OCI-LY7 (cell line): ENCODE measurements at regions of chr1 and their contacts with region 1.

Region 1: DNA sequence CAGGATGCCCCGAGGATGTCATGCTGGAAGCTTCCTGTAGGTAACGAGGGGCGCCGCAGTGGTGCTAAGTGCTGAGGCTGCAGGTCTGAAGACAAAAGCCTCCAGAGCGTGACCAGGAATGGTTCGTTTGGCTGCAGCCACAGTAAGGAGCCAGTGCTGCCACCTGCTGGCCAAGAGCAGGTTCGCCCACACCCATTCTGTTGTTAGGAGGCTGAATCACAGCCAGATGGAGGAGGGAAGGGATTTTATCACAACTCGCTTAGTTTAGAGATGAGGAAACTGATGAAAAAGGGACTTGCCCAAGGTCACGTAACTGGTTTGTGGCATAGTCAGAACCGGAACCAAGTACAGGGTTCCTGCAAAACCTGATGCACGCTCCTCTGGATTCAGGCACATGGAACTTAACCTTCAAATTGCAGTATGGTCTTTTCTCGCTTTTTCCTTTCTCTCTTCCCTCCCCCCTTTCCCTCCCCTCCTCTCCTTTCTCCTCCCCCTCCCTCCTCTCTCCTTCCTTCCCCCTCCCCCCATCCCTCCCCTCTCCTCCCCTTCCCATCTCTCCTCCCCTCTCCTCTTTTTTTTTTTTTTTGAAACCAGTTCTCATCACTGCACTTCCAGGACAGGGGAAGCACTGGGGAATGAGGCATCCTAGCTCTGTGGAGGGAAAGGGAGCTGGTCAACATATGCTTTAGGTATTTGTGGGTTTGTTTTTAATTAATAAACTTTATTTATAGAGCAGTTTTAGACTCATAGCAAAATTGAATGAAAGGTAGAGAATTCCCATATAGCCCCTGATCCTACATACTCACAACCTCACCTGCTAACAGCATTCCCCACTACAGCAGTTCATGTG is 81.8 kb downstream of the MPZL1 start:
- DNase-seq: peak; percentile 96
- H3K4me3 ChIP-seq: no peak overlapping the region
- H3K27ac ChIP-seq: no peak overlapping the region
- H3K4me1 ChIP-seq: peaks cover 17% of the 10 kb centered on the region
- CTCF ChIP-seq: peak; percentile 98

Region 2: GRCh38 chr1:167454894-167455785 is 348.4 kb before region 1 on chr1:
- CTCF ChIA-PET with region 1: no interaction called
- POLR2A ChIA-PET with region 1: no interaction called
- intact Hi-C with region 1: loop called (anchors 5 kb)
- DNase-seq: peak; percentile 75
- H3K4me3 ChIP-seq: peak overlapping the region; percentile 70
- H3K27ac ChIP-seq: no peak overlapping the region
- H3K4me1 ChIP-seq: peaks cover 40% of the 10 kb centered on the region
- CTCF ChIP-seq: no peak

Region 3: GRCh38 chr1:167553136-167554027 is 250.2 kb before region 1 on chr1 and contains the start of gene CREG1:
- CTCF ChIA-PET with region 1: no interaction called
- POLR2A ChIA-PET with region 1: no interaction called
- intact Hi-C with region 1: loop called (anchors 5 kb)
- DNase-seq: peak; percentile 92
- H3K4me3 ChIP-seq: peak within 1 kb of the TSS; percentile 84
- H3K27ac ChIP-seq: peak within 1 kb of the TSS; percentile 40
- H3K4me1 ChIP-seq: peaks cover 58% of the 10 kb centered on the region
- CTCF ChIP-seq: 0 out of 2 replicates have a peak, but pooled peaks have one; percentile 10
- total RNA-seq, gene CREG1: 36.0 and 52.2 TPM in 2 replicates

Region 4: DNA sequence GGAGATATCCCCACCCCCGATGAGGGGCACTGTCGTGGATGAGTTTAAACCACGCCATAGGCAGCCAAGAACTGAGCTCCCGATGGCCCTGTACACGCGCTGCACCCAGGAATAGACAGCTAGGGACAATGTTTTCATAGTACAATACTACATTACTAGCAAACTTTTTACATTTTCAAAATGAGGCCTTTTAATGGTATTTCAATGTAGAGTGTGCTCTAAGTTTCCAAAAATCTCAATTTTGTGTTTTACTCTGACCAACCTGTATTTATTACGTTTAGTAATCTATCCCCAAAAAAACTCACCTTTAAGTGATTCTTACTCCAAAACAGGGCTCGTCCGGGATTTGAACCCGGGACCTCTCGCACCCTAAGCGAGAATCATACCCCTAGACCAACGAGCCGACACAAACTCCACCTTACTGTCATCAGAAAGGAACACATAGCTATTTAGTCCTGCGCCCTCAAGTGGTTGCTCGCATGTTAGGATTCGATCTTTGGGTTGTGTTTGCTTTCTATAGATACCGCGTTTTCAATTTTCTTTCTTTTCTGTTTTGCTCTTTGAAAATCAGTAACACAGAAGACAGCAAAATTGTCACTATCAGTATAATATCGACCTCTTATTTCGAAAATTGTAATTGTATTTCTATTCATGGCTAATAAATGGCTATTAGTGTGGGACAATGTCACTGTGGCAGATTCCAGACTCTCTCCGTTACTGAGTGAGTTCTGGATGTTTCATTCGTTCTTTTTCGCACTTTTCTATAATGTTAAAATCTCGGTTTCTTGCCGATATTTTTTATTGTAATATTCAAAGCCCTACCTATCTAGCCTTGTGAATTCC is 88.2 kb before region 1 on chr1:
- CTCF ChIA-PET with region 1: no interaction called
- POLR2A ChIA-PET with region 1: no interaction called
- intact Hi-C with region 1: loop called (anchors 1 kb)
- DNase-seq: peak; percentile 94
- H3K4me3 ChIP-seq: peak overlapping the region; percentile 75
- H3K27ac ChIP-seq: peak overlapping the region; percentile 73
- H3K4me1 ChIP-seq: peaks cover 47% of the 10 kb centered on the region
- CTCF ChIP-seq: peak; percentile 94

Region 5: GRCh38 chr1:167721617-167722151 is 81.9 kb before region 1 on chr1 and contains the start of gene MPZL1:
- CTCF ChIA-PET with region 1: no interaction called
- POLR2A ChIA-PET with region 1: no interaction called
- intact Hi-C with region 1: loop called (anchors 1 kb)
- DNase-seq: peak; percentile 95
- H3K4me3 ChIP-seq: peak within 1 kb of the TSS; percentile 94
- H3K27ac ChIP-seq: peak within 1 kb of the TSS; percentile 78
- H3K4me1 ChIP-seq: peaks cover 78% of the 10 kb centered on the region
- CTCF ChIP-seq: no peak
- total RNA-seq, gene MPZL1: 36.2 and 48.9 TPM in 2 replicates

Region 6: DNA sequence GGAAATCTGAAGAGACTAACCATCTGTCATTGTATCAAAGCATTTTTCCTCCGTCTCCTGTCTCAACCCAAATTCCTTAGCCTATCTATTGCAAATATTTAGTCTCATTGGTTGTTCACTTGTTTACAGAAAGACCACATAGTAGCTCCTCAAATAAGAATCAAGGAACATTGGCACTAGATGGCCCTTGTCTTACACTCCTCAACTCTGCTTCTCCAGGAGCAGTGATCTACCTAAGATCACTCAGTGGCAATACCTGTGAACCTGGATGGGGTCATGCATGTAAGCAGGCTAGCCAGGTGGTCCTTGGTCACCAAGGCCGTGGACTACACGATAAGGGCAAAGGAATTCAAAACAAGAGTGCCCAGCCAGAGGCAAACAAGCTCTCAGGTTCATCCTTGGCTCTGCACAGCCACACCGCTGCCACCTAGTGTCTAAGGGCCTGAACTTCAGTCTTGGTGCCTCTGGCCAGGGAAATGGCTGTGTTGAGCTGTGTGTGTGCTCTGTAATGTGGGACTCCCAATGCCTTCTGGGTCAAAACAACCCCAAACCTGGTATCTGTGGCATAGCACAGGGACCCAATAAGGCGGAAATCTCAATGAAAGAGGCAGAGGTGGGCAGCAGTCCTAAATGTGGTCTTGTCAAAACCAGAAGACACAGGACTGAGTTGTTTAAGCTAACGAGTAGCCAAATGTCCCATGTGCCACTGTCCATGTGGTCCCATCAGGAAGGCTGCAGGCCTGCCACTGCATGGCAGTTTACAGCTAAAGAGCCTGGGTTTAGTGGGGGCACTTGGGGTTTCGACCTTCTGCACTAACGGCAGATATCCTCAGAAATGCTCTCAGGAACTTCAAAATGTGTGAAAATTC is 278.7 kb after region 1 on chr1:
- CTCF ChIA-PET with region 1: no interaction called
- POLR2A ChIA-PET with region 1: no interaction called
- intact Hi-C with region 1: loop called (anchors 10 kb)
- DNase-seq: peak; percentile 78
- H3K4me3 ChIP-seq: no peak overlapping the region
- H3K27ac ChIP-seq: no peak overlapping the region
- H3K4me1 ChIP-seq: no peaks in the 10 kb centered on the region
- CTCF ChIP-seq: peak; percentile 90